ENCODE measurements at regions of chr1 and their contacts with region 1.

Region 1: DNA sequence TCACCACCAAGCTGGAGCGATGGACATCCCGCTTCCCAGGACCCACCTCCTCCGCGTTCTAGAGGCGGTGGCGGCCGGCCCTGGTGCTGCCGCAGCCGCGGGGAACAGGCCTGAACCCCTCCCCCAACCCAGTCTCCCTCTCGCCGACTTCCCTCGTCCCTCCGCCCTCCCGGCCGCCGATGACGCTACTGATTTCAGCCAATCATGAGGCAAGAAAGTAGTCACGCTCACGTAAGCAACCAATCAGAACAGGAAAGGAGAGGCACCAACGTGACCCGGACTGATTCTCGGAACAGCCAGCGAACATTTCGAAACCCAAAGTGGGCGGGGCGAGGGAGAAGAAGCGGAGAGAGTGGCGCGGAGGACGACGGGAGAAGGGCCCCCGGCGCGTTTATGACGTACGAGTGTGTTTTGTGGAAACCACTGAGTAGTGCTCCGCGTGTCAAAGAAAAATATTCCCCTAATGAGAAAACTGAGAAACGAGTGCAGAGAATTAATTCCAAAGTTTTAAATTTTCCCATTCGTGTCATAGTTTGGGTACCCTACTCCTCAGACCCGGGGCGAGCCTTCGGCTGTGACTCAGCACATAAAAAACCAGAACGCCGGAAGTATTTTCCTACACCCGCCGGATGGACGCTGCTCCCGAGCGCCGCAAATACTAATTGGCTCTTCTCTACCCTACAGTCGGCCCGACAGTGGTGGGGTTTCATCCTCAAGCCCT is at the start of gene NRDC:
- DNase-seq: peak; percentile 100
- H3K4me3 Mint-ChIP-seq: no peak within 1 kb of the TSS
- H3K27ac Mint-ChIP-seq: no peak within 1 kb of the TSS
- H3K4me1 Mint-ChIP-seq: peaks cover 28% of the 10 kb centered on the region
- H3K27me3 Mint-ChIP-seq: peaks cover 8% of the 10 kb centered on the region
- total RNA-seq, gene NRDC: 170 and 175 TPM in 2 replicates

Region 2: DNA sequence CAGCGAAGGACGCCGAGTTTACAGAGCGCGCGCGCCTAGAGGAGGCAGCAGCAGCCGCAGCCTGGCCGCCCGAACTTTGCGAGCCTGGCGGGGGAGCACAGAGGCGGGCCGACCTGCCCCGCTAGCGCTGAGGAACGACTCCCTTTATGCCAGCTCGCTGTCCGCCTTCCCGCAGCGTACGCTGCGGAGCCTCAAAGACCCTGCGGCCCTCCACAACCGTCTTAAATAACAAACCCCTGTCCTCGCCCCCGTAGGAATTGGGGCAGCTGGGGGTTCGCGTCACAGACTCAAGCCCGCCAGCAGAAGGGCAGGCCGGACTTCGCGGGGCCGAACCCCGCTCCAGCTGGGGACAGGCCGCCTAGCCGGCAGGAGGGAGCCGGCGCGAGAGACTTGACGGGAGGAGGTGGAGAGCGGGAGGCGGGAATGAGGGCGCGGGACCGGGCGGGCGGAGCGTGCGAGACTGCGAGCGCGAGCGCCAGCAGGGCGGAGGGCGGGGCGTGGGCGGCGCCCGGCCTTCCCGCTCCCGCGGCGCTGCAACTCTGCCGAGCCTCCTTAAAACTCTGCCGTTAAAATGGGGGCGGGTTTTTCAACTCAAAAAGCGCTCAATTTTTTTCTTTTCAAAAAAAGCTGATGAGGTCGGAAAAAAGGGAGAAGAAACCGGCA is 910.5 kb before region 1 on chr1:
- intact Hi-C with region 1: loop called (anchors 5 kb)
- DNase-seq: peak; percentile 96
- H3K4me3 Mint-ChIP-seq: peak overlapping the region; percentile 89
- H3K27ac Mint-ChIP-seq: peak overlapping the region; percentile 98
- H3K4me1 Mint-ChIP-seq: peaks cover 23% of the 10 kb centered on the region
- H3K27me3 Mint-ChIP-seq: peaks cover 8% of the 10 kb centered on the region

Region 3: DNA sequence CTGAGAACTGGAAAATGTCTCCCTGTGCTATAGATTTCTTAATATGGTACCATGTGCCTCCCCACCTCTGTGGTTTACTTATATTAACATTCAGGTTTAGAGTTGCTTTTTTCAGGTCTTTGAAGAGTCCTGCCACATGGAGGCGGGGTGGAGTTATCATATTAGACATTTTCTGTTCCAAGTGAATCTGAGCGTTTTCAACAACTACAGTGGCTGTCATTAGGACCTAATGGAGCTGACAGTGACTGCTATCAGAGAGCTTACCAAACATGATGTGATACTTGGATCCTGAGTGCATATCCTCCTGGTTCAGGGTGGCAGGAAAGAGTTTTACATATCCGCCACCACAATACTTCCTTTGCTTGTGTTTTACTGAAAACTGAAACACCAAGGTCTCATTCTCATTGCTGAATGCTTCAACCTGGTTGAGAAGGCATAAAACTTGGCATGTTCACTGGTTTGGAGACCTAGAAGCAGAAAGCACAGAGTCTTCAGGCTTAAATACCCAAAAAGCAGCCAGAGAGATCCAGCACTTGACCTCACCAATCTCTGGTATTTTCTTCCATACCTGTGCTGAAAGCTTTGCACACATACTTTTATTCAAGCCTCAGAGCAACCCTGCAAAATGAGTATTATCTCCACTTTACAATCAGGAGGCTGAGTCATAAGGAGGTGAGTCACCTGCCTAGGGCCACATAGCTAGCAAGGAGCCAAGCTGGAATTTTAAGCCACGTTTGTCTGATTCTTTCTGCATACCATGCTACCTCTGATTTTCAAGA is 309.3 kb before region 1 on chr1:
- intact Hi-C with region 1: loop called (anchors 5 kb)
- DNase-seq: peak; percentile 78
- H3K4me3 Mint-ChIP-seq: peak overlapping the region; percentile 48
- H3K27ac Mint-ChIP-seq: peak overlapping the region; percentile 89
- H3K4me1 Mint-ChIP-seq: peaks cover 35% of the 10 kb centered on the region
- H3K27me3 Mint-ChIP-seq: no peaks in the 10 kb centered on the region

Region 4: GRCh38 chr1:51616901-51617708 is 261.7 kb before region 1 on chr1 and contains the start of gene OSBPL9:
- intact Hi-C with region 1: loop called (anchors 5 kb)
- DNase-seq: peak; percentile 95
- H3K4me3 Mint-ChIP-seq: peak within 1 kb of the TSS; percentile 99
- H3K27ac Mint-ChIP-seq: peak within 1 kb of the TSS; percentile 97
- H3K4me1 Mint-ChIP-seq: peaks cover 23% of the 10 kb centered on the region
- H3K27me3 Mint-ChIP-seq: peaks cover 6% of the 10 kb centered on the region
- total RNA-seq, gene OSBPL9: 47.4 and 47.9 TPM in 2 replicates

Region 5: GRCh38 chr1:51729156-51729823 is 149.5 kb before region 1 on chr1:
- intact Hi-C with region 1: loop called (anchors 5 kb)
- DNase-seq: peak; percentile 98
- H3K4me3 Mint-ChIP-seq: peak overlapping the region; percentile 94
- H3K27ac Mint-ChIP-seq: peak overlapping the region; percentile 91
- H3K4me1 Mint-ChIP-seq: peaks cover 19% of the 10 kb centered on the region
- H3K27me3 Mint-ChIP-seq: no peaks in the 10 kb centered on the region

Region 6: DNA sequence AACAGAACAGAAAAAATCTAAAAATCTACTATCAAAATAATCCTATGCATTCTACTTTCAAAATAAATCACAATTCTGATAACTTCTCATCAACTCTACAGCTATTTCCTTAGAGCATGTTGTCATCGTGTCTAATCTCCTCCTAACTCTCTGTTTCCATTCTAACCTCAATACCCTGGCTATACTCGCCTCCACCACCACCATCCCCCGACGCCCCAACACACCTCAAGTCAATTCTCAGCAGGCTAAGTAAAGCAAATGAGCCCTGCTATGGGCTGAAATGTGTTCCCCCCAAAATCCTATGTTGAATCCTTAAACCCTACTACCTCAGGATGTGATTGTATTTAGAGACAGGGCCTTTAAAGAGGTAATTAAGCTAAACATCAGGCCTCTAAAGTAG is 34.8 kb before region 1 on chr1:
- intact Hi-C with region 1: loop called (anchors 5 kb)
- DNase-seq: no peak
- H3K4me3 Mint-ChIP-seq: no peak overlapping the region
- H3K27ac Mint-ChIP-seq: peak overlapping the region; percentile 3
- H3K4me1 Mint-ChIP-seq: peaks cover 26% of the 10 kb centered on the region
- H3K27me3 Mint-ChIP-seq: no peaks in the 10 kb centered on the region

Region 7: GRCh38 chr1:51863384-51863783 is 15.4 kb before region 1 on chr1:
- intact Hi-C with region 1: loop called (anchors 2 kb)
- DNase-seq: no peak
- H3K4me3 Mint-ChIP-seq: no peak overlapping the region
- H3K27ac Mint-ChIP-seq: peak overlapping the region; percentile 48
- H3K4me1 Mint-ChIP-seq: peaks cover 25% of the 10 kb centered on the region
- H3K27me3 Mint-ChIP-seq: no peaks in the 10 kb centered on the region

Region 8: DNA sequence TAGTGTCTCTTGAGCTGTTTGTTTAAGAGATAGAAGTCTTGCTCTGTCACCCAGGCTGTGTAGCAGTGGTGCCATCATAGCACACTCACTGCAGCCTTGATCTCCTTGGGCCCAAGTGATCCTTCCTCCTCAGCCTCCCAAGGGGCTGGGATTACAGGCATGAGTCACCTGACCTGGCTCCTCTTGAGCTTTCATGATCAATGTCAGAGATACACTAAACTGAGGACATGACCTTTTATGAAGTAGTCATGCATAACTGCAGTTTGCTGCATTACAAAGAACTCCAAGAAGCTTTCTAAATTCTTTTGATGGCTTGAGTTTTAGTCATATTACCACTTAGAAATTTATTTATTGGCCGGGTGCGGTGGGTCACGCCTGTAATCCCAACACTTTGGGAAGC is 409.5 kb after region 1 on chr1:
- intact Hi-C with region 1: no loop called
- DNase-seq: no peak
- H3K4me3 Mint-ChIP-seq: no peak overlapping the region
- H3K27ac Mint-ChIP-seq: no peak overlapping the region
- H3K4me1 Mint-ChIP-seq: no peaks in the 10 kb centered on the region
- H3K27me3 Mint-ChIP-seq: no peaks in the 10 kb centered on the region